ENCODE measurements at regions of chr2 and their contacts with region 1.

Region 1: DNA sequence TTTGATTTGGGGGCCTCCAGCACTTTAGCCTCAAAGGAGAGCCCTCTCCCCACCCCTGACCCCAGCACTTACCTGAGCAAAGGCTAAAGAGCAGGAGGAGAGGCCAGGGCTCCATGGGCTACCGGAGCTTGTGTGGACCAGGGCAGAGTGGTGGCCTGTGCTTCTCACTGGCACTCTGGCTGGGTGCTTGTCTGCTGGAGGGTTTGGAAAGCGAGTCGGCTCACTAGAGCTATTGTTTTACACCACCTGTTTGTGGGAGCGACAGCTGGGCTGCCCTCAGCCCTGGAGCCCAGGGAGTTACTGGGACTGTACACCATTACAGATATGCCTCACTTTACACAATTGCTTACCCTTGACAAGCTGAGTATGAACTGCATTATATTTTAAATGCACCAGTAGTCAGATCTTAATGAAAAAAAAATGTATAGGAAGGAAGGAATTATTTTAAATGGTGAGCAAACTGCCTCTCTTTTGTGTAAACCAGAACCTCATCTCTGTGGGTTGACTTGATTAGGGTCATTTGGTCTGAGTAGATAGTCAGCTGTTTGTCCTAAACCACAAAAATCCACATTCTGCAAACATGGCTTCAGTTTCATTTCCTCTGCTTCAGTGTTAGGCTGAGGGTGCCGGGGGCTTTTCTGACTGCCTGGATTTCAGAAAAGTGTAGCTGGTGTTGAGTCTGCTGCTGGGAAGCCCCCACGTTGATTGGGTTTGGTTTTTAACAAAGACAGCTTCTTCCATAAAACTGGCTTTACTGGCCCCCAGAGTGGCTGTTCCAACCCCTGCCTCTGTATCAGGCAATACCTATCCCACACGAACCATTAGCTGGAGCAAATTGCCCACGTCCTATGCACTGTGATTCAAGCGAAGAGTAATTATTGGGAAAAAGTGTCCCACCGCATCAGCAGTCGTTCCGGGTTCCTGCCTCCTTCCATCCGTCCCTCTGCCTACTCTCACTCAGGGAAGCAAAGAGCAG is at the start of gene CHRNA1:
- DNase-seq: peak; percentile 63
- ATAC-seq: peak; percentile 76
- H3K4me3 ChIP-seq: no peak within 1 kb of the TSS
- H3K27ac ChIP-seq: no peak within 1 kb of the TSS
- H3K4me1 ChIP-seq: peaks cover 30% of the 10 kb centered on the region
- H3K27me3 ChIP-seq: no peaks in the 10 kb centered on the region
- CTCF ChIP-seq: no peak
- total RNA-seq, gene CHRNA1: 0.23 and 1.8 TPM in 2 replicates

Region 2: GRCh38 chr2:174748948-174749347 is 15.6 kb before region 1 on chr2:
- CTCF ChIA-PET with region 1: interaction called, 25 read pairs
- POLR2A ChIA-PET with region 1: no interaction called
- intact Hi-C with region 1: loop called (anchors 2 kb)
- DNase-seq: peak; percentile 91
- ATAC-seq: peak; percentile 80
- H3K4me3 ChIP-seq: no peak overlapping the region
- H3K27ac ChIP-seq: no peak overlapping the region
- H3K4me1 ChIP-seq: peaks cover 20% of the 10 kb centered on the region
- H3K27me3 ChIP-seq: no peaks in the 10 kb centered on the region
- CTCF ChIP-seq: peak; percentile 88

Region 3: GRCh38 chr2:174878537-174879147 is 114.1 kb after region 1 on chr2:
- CTCF ChIA-PET with region 1: no interaction called
- POLR2A ChIA-PET with region 1: no interaction called
- intact Hi-C with region 1: no loop called
- DNase-seq: peak; percentile 50
- ATAC-seq: peak; percentile 46
- H3K4me3 ChIP-seq: peak overlapping the region; percentile 55
- H3K27ac ChIP-seq: no peak overlapping the region
- H3K4me1 ChIP-seq: no peaks in the 10 kb centered on the region
- H3K27me3 ChIP-seq: no peaks in the 10 kb centered on the region
- CTCF ChIP-seq: no peak

Region 4: GRCh38 chr2:174985630-174986029 is 221.1 kb after region 1 on chr2:
- CTCF ChIA-PET with region 1: no interaction called
- POLR2A ChIA-PET with region 1: no interaction called
- intact Hi-C with region 1: no loop called
- DNase-seq: peak; percentile 41
- ATAC-seq: peak; percentile 38; the same call in 1 of the 2 replicates
- H3K4me3 ChIP-seq: no peak overlapping the region
- H3K27ac ChIP-seq: no peak overlapping the region
- H3K4me1 ChIP-seq: no peaks in the 10 kb centered on the region
- H3K27me3 ChIP-seq: no peaks in the 10 kb centered on the region
- CTCF ChIP-seq: peak; percentile 85

Region 5: GRCh38 chr2:176001916-176002687 is 1237.5 kb after region 1 on chr2 and contains the start of gene LNPK:
- CTCF ChIA-PET with region 1: no interaction called
- POLR2A ChIA-PET with region 1: no interaction called
- intact Hi-C with region 1: loop called (anchors 5 kb)
- DNase-seq: peak; percentile 92
- ATAC-seq: peak; percentile 92
- H3K4me3 ChIP-seq: peak within 1 kb of the TSS; percentile 86
- H3K27ac ChIP-seq: no peak within 1 kb of the TSS
- H3K4me1 ChIP-seq: peaks cover 11% of the 10 kb centered on the region
- H3K27me3 ChIP-seq: no peaks in the 10 kb centered on the region
- CTCF ChIP-seq: no peak
- total RNA-seq, gene LNPK: 19.5 and 21.9 TPM in 2 replicates

Measured in PC-3 (cell line).